ENCODE measurements at regions of chr17 and their contacts with region 1.

Region 1: GRCh38 chr17:45135192-45135977 is at the start of gene ACBD4:
- DNase-seq: peak; percentile 97
- ATAC-seq: peak; percentile 90
- H3K4me3 ChIP-seq: peak within 1 kb of the TSS; percentile 84
- H3K27ac ChIP-seq: peak within 1 kb of the TSS; percentile 28
- H3K4me1 ChIP-seq: peaks cover 8% of the 10 kb centered on the region
- H3K27me3 ChIP-seq: no peaks in the 10 kb centered on the region
- CTCF ChIP-seq: peak; percentile 100
- EP300 ChIP-seq: no peak
- POLR2A ChIP-seq: peak; percentile 73
- RAD21 ChIP-seq: peak; percentile 94
- polyA plus RNA-seq, gene ACBD4: 0.20 to 0.27 TPM

Region 2: GRCh38 chr17:44919885-44920564 is 215.4 kb before region 1 on chr17:
- CTCF ChIA-PET with region 1: interaction called, 82 read pairs
- POLR2A ChIA-PET with region 1: no interaction called
- RAD21 ChIA-PET with region 1: interaction called, 11 read pairs
- SMC1A ChIA-PET with region 1: interaction called, 7 read pairs
- in situ Hi-C with region 1: no loop called
- intact Hi-C with region 1: loop called (anchors 1 kb)
- DNase-seq: peak; percentile 54
- ATAC-seq: peak; percentile 97
- H3K4me3 ChIP-seq: no peak overlapping the region
- H3K27ac ChIP-seq: no peak overlapping the region
- H3K4me1 ChIP-seq: peaks cover 12% of the 10 kb centered on the region
- H3K27me3 ChIP-seq: peaks cover 0 to 3% of the 10 kb centered on the region in 2 experiments; a peak in 1 of 4 replicates
- CTCF ChIP-seq: peak; percentile 83 to 98 (median 88); a peak in 5 of 6 replicates
- EP300 ChIP-seq: no peak
- POLR2A ChIP-seq: no peak
- RAD21 ChIP-seq: peak; percentile 86

Region 3: DNA sequence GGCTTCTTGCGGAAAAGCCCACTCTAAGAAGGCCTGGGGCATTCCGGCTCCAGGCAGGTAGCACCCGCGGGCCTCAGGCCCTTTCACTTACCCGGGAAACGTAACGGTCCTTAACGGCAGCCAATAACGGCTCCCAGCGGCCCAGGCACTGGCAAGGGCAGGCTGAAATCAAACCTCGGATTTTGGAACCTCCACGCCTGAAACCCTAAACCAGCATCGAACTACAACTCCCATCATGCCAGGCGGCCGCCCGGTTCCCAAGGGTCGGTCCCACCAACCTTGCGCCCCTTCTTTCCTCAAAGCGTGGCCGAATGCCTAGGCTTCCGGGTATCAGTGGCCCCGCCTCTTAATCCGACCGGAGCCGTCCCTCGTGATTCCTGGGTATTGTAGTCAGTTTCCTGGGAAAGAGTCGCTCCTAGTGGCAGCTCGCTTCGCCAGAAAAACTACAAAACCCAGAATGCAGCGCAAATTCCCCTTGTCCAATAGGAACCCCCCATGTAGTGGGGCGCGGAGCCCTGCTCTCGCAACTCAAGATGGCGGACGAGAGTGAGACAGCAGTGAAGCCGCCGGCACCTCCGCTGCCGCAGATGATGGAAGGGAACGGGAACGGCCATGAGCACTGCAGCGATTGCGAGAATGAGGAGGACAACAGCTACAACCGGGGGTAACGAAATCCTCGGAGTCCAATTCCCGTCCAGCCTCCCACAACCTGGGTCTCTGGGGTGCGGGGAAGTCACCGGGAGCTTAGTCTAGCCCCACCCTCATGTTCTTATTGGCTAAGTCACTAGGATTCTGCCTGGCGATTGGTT is 74.4 kb before region 1 on chr17 and contains the start of gene NMT1:
- CTCF ChIA-PET with region 1: interaction called, 17 read pairs
- POLR2A ChIA-PET with region 1: interaction called, 3 read pairs
- RAD21 ChIA-PET with region 1: interaction called, 3 read pairs
- SMC1A ChIA-PET with region 1: no interaction called
- in situ Hi-C with region 1: no loop called
- intact Hi-C with region 1: no loop called
- DNase-seq: peak; percentile 99
- ATAC-seq: peak; percentile 90
- H3K4me3 ChIP-seq: peak within 1 kb of the TSS; percentile 84
- H3K27ac ChIP-seq: peak within 1 kb of the TSS; percentile 98
- H3K4me1 ChIP-seq: peaks cover 10% of the 10 kb centered on the region
- H3K27me3 ChIP-seq: no peaks in the 10 kb centered on the region
- CTCF ChIP-seq: no peak
- EP300 ChIP-seq: no peak
- POLR2A ChIP-seq: peak; percentile 98
- RAD21 ChIP-seq: no peak
- polyA plus RNA-seq, gene NMT1: 282 to 342 TPM

Region 4: GRCh38 chr17:45148183-45149036 is 13.0 kb after region 1 on chr17 and contains the start of gene HEXIM1:
- CTCF ChIA-PET with region 1: interaction called, 280 read pairs
- POLR2A ChIA-PET with region 1: interaction called, 49 read pairs
- RAD21 ChIA-PET with region 1: interaction called, 121 read pairs
- SMC1A ChIA-PET with region 1: interaction called, 81 read pairs
- in situ Hi-C with region 1: no loop called
- intact Hi-C with region 1: loop called (anchors 1 kb)
- DNase-seq: peak; percentile 95
- ATAC-seq: peak; percentile 83
- H3K4me3 ChIP-seq: peak within 1 kb of the TSS; percentile 96
- H3K27ac ChIP-seq: peak within 1 kb of the TSS; percentile 100
- H3K4me1 ChIP-seq: peaks cover 23% of the 10 kb centered on the region
- H3K27me3 ChIP-seq: no peaks in the 10 kb centered on the region
- CTCF ChIP-seq: no peak
- EP300 ChIP-seq: peak; percentile 13 to 14; a peak in 1 of 4 replicates
- POLR2A ChIP-seq: peak; percentile 100
- RAD21 ChIP-seq: no peak
- polyA plus RNA-seq, gene HEXIM1: 1.9 to 2.1 TPM

Region 5: GRCh38 chr17:45172454-45173286 is 37.3 kb after region 1 on chr17:
- CTCF ChIA-PET with region 1: interaction called, 19 read pairs
- POLR2A ChIA-PET with region 1: no interaction called
- RAD21 ChIA-PET with region 1: interaction called, 6 read pairs
- SMC1A ChIA-PET with region 1: no interaction called
- in situ Hi-C with region 1: no loop called
- intact Hi-C with region 1: no loop called
- DNase-seq: no peak
- ATAC-seq: peak; percentile 93
- H3K4me3 ChIP-seq: peak overlapping the region; percentile 23
- H3K27ac ChIP-seq: peak overlapping the region; percentile 64
- H3K4me1 ChIP-seq: peaks cover 7% of the 10 kb centered on the region; the same call in 1 of the 2 replicates
- H3K27me3 ChIP-seq: no peaks in the 10 kb centered on the region
- CTCF ChIP-seq: no peak
- EP300 ChIP-seq: no peak
- POLR2A ChIP-seq: 0 out of 2 replicates have a peak, but pooled peaks have one; percentile 26
- RAD21 ChIP-seq: no peak

Region 6: DNA sequence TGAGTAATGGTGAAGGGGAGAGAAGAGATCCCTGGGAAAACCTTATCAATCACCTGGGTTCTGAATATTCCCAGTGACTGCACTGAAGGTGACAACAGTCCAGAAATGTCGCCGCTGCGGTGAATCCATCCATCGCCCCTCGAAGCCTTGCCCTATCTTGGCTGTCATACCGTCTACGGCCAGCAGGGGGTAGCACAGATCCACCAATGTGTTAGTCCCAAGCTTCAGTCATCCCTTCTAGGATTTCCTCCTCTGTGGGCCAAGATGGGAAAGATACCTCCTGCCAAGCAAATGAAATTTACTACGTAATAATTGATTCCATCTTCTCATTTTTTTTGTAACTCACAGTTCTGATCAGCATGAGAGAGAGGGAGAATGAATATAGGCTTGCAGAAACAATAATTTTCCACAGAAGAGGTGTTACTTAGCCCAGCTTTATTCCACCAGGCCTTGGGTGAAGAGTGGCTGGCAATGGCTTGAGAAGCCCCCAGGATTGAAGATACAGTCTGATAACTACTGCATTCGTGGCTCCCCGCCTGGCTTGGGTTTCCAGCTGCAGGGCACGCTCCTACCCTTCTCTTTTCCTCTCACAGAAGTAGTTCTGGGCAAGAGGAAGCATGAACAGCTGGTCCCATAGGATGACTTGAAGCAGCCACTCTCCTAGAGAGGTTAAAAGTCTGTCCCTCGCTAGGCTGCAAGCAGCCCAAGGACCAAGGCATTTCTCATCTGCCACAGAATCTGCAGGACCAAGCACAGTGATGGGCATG is 83.7 kb after region 1 on chr17:
- CTCF ChIA-PET with region 1: interaction called, 27 read pairs
- POLR2A ChIA-PET with region 1: no interaction called
- RAD21 ChIA-PET with region 1: interaction called, 17 read pairs
- SMC1A ChIA-PET with region 1: interaction called, 13 read pairs
- in situ Hi-C with region 1: no loop called
- intact Hi-C with region 1: no loop called
- DNase-seq: no peak
- ATAC-seq: peak; percentile 42
- H3K4me3 ChIP-seq: no peak overlapping the region
- H3K27ac ChIP-seq: no peak overlapping the region
- H3K4me1 ChIP-seq: peaks cover 13% of the 10 kb centered on the region
- H3K27me3 ChIP-seq: no peaks in the 10 kb centered on the region
- CTCF ChIP-seq: peak; percentile 92 to 97 (median 94)
- EP300 ChIP-seq: no peak
- POLR2A ChIP-seq: no peak
- RAD21 ChIP-seq: peak; percentile 97